Activated T-helper 1 cell treated with anti-CD3 and anti-CD28 coated beads, Interleukin-12 subunit alpha, Interleukin-12 subunit beta, Interleukin-2, Interleukin-4 antibody, amounts not matched to agents 30 ng/mL and 10 ng/mL and 1 ng/mL, durations not matched to agents 14 hours and 24 hours and 36 hours (primary cell): ENCODE measurements at regions of chr4 and their contacts with region 1.

Region 1: DNA sequence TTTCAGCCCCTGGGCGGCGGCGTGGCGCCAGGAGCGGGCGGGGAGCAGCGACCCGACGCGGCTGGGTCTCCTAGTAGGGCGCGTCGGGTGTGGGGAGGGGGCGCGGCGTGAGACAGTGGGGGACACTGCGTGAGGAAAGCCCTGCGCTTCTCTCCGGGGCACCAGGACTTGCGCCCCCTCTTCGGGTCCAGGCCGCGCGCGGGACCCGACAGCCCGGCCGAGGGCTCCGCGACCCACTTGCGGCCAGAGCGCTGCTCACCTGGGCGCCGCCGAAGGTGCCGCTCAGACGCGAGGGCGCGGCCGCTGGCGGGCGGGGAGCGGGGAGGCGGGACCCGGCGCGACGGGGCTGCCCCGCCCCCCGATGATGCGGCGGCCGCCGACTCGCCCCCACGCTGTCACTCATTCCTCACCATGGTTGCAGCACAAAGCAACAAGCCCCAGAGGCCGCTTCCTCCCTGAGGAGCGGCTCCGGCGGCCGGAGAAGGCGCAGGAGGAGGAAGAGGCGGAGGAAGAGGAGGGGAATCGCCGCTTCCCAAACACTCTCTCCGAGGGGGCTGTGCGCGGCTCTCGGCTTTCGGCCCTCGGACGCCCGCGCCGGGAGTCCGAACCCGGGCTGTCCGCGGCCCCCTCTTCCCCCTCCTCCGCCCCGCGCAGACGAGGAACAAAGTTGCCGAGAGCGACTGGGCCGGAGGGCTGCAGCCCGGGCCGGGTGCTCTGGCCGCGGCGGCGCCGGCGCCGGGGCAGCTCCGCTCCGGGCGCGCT is at the start of gene RAPGEF2:
- DNase-seq: peak; percentile 86
- H3K4me3 Mint-ChIP-seq: peak within 1 kb of the TSS; percentile 85
- H3K27ac Mint-ChIP-seq: peak within 1 kb of the TSS; percentile 93
- H3K4me1 Mint-ChIP-seq: peaks cover 61% of the 10 kb centered on the region
- H3K27me3 Mint-ChIP-seq: peaks cover 7% of the 10 kb centered on the region
- total RNA-seq, gene RAPGEF2: 27.5 and 28.3 TPM in 2 replicates

Region 2: GRCh38 chr4:158161551-158162354 is 941.0 kb before region 1 on chr4:
- intact Hi-C with region 1: no loop called
- DNase-seq: no peak
- H3K4me3 Mint-ChIP-seq: no peak overlapping the region
- H3K27ac Mint-ChIP-seq: no peak overlapping the region
- H3K4me1 Mint-ChIP-seq: no peaks in the 10 kb centered on the region
- H3K27me3 Mint-ChIP-seq: peaks cover 4% of the 10 kb centered on the region

Region 3: DNA sequence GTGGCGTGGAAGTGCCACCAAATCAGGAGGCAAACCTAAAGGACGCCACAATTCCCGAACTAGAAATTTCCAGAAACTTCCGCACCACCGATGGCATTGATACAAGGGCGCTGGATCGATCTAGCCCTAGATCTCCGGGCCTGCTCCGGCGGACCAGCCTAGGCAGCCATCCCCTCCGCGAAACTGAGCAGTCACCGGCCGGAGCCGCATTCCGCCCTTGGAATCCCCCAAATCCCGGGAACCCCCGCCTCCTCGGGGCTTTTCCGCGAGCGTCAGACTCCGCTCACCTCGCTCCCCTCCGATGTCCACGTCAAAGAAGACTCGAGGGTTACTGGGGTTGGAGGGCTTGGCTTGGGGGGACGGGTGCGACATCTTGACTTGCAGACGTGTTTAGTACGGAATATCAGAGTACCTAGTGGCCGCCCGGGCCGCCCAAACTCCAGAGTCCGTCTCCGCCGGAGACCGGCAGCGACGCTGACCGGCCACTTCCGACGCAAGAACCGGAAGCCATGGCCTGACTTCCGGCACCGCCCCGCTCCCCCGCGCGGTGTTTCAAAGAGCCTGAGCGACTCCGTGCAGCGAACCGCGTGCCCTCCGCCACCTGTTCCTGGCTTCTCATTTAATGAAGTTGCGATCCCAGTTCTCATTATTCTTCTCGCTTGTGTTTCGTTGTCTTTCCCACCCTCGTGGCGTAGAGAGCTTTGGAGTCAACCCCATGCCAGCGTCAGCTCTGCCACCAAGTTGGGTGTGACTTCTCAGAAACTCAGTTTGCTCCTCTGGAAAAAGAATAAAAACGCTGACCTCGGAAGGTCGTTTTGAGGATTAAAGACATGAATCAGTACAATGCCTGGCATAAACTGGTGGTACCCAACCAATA is 379.6 kb before region 1 on chr4 and contains the start of gene PPID:
- intact Hi-C with region 1: loop called (anchors 2 kb)
- DNase-seq: peak; percentile 80
- H3K4me3 Mint-ChIP-seq: peak within 1 kb of the TSS; percentile 95
- H3K27ac Mint-ChIP-seq: peak within 1 kb of the TSS; percentile 100
- H3K4me1 Mint-ChIP-seq: peaks cover 59% of the 10 kb centered on the region
- H3K27me3 Mint-ChIP-seq: peaks cover 5% of the 10 kb centered on the region
- total RNA-seq, gene PPID: 52.8 and 55.4 TPM in 2 replicates

Region 4: GRCh38 chr4:158856852-158857251 is 246.0 kb before region 1 on chr4:
- intact Hi-C with region 1: loop called (anchors 2 kb)
- DNase-seq: no peak
- H3K4me3 Mint-ChIP-seq: no peak overlapping the region
- H3K27ac Mint-ChIP-seq: no peak overlapping the region
- H3K4me1 Mint-ChIP-seq: peaks cover 12% of the 10 kb centered on the region
- H3K27me3 Mint-ChIP-seq: no peaks in the 10 kb centered on the region

Region 5: GRCh38 chr4:159071178-159071991 is 31.4 kb before region 1 on chr4:
- intact Hi-C with region 1: no loop called
- DNase-seq: no peak
- H3K4me3 Mint-ChIP-seq: no peak overlapping the region
- H3K27ac Mint-ChIP-seq: no peak overlapping the region
- H3K4me1 Mint-ChIP-seq: peaks cover 19% of the 10 kb centered on the region
- H3K27me3 Mint-ChIP-seq: no peaks in the 10 kb centered on the region

Region 6: DNA sequence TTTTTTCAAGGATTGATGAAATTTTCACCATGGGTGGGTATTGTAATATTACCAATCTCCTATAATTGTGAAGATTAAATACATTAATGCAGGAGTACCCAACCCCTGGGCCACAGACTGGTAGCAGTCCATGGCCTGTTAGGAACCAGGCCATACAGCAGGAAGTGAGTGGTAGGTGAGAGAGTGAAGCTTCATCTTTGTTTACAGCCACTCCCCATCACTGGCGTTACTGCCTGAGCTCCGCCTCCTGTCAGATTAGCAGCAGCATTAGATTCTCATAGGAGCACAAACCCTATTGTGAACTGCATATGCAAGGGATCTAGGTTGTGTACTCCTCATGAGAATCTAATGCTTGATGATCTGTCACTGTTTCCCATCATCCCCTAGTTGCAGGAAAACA is 15.2 kb after region 1 on chr4:
- intact Hi-C with region 1: loop called (anchors 1 kb)
- DNase-seq: no peak
- H3K4me3 Mint-ChIP-seq: no peak overlapping the region
- H3K27ac Mint-ChIP-seq: no peak overlapping the region
- H3K4me1 Mint-ChIP-seq: peaks cover 37% of the 10 kb centered on the region
- H3K27me3 Mint-ChIP-seq: no peaks in the 10 kb centered on the region

Region 7: DNA sequence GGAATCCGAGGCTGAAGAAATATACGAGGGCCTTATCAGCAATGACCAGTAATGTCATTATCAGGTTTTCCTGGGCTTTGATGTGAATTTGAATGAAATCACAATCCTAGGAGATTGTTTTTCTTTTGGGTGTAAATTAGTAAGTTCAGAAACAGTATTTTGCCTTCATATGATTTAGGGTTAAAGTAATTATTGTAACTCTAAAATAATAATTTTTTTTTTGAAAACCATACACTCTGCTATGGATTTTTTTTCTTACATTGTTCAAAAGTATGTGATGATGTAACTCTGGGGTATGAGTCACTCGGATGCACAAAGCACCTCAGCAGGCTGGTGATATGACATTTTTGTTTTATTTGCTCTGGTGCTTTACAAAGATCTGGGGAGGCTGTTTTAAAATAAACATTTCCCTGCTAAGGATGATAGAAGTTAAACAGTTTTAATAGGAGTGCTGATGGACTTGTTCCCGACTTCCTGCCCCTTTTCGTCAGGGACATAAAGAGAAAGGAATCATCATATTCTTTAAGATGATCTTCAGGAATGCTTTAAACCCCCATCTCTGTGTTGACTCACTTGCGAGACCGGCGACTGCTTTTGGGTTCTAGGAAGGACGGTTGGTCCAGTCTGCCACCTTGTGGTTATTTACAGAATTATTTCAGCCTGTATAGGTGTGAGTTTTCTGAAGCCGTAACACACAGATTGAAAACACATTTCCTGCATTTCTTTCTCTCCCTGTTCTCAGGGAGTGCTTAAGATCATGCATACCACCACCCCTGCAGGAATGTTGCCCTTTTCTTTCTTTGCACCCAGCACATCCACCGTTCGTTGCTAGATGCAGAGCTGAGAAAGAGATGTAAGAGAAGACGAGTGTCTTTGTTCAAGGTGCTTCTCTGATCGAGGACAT is 72.5 kb after region 1 on chr4:
- intact Hi-C with region 1: loop called (anchors 1 kb)
- DNase-seq: peak; percentile 51
- H3K4me3 Mint-ChIP-seq: no peak overlapping the region
- H3K27ac Mint-ChIP-seq: peak overlapping the region; percentile 49
- H3K4me1 Mint-ChIP-seq: peaks cover 64% of the 10 kb centered on the region
- H3K27me3 Mint-ChIP-seq: no peaks in the 10 kb centered on the region

Region 8: GRCh38 chr4:159655547-159655946 is 552.7 kb after region 1 on chr4:
- intact Hi-C with region 1: no loop called
- DNase-seq: no peak
- H3K4me3 Mint-ChIP-seq: no peak overlapping the region
- H3K27ac Mint-ChIP-seq: no peak overlapping the region
- H3K4me1 Mint-ChIP-seq: no peaks in the 10 kb centered on the region
- H3K27me3 Mint-ChIP-seq: peaks cover 1% of the 10 kb centered on the region